Transverse colon (tissue), 4 donors: ENCODE measurements at regions of chr14 and their contacts with region 1.

Region 1: DNA sequence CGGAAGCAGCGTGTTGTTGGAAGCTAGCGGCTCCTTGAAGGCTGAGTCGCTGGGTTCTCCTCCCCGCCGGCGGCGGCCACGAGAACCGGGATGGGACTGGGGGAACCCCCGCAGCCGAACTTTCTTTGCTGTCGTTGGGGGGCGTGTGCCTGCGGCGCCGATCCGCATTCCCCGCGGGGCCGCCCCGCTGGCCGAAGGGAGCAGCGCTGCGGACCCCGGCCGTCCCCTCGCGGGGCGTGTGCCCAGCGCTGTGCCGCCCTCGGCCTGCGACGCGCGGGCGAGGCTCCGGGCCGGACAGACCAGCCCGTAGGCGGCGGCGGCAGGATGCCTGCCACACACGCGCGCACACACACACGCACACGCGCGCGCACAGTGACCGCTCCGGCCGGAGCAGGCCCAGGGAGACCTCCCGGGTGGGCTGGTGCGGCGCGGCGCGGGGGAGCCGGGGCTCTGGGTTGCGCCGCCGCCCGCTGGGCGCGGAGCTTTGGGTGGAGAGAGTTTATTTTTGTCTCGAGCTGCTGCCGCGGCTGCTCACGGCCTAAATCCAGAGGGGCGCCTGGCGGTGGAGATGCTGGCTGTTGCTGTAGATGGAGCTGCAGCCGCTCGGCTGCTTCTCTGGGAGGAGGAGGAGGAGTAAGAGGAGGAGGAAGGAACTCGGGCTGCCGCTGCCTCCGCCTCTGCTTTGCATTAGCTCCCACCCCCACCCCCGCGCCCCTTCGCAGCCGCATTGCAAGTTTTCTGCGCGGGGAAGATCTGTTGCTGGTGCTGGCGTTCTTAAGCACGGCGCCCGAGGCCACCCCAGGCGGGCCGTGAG is at the start of gene SAMD4A:
- DNase-seq: peak; percentile 75
- H3K4me3 ChIP-seq: peak within 1 kb of the TSS; percentile 51 to 77 (median 70)
- H3K27ac ChIP-seq: peak within 1 kb of the TSS; percentile 97 to 99 (median 98)
- H3K4me1 ChIP-seq: peaks cover 0 to 35% (median 28%) of the 10 kb centered on the region in 4 donors
- H3K27me3 ChIP-seq: no peaks in the 10 kb centered on the region
- CTCF ChIP-seq: peak in 2 of 5 experiments; percentile 18 to 32
- EP300 ChIP-seq: no peak
- POLR2A ChIP-seq: peak; percentile 48
- total RNA-seq, gene SAMD4A: 15.3 to 40.2 (median 22.3) TPM

Region 2: GRCh38 chr14:53875324-53875897 is 691.2 kb before region 1 on chr14:
- in situ Hi-C with region 1: no loop called
- intact Hi-C with region 1: no loop called
- DNase-seq: no peak
- H3K4me3 ChIP-seq: no peak overlapping the region
- H3K27ac ChIP-seq: no peak overlapping the region
- H3K4me1 ChIP-seq: no peaks in the 10 kb centered on the region
- H3K27me3 ChIP-seq: no peaks in the 10 kb centered on the region
- CTCF ChIP-seq: no peak
- EP300 ChIP-seq: no peak
- POLR2A ChIP-seq: no peak

Region 3: GRCh38 chr14:54291491-54292191 is 275.0 kb before region 1 on chr14:
- in situ Hi-C with region 1: no loop called
- intact Hi-C with region 1: no loop called
- DNase-seq: no peak
- H3K4me3 ChIP-seq: no peak overlapping the region
- H3K27ac ChIP-seq: no peak overlapping the region
- H3K4me1 ChIP-seq: no peaks in the 10 kb centered on the region
- H3K27me3 ChIP-seq: no peaks in the 10 kb centered on the region
- CTCF ChIP-seq: no peak
- EP300 ChIP-seq: no peak
- POLR2A ChIP-seq: no peak

Region 4: GRCh38 chr14:54411371-54411770 is 155.2 kb before region 1 on chr14:
- in situ Hi-C with region 1: no loop called
- intact Hi-C with region 1: no loop called
- DNase-seq: no peak
- H3K4me3 ChIP-seq: no peak overlapping the region
- H3K27ac ChIP-seq: no peak overlapping the region
- H3K4me1 ChIP-seq: no peaks in the 10 kb centered on the region
- H3K27me3 ChIP-seq: no peaks in the 10 kb centered on the region
- CTCF ChIP-seq: no peak
- EP300 ChIP-seq: no peak
- POLR2A ChIP-seq: no peak

Region 5: GRCh38 chr14:54440873-54441868 is 125.4 kb before region 1 on chr14 and contains the start of gene CNIH1:
- in situ Hi-C with region 1: no loop called
- intact Hi-C with region 1: no loop called
- DNase-seq: peak; percentile 94
- H3K4me3 ChIP-seq: peak within 1 kb of the TSS; percentile 49 to 86 (median 72)
- H3K27ac ChIP-seq: peak within 1 kb of the TSS; percentile 94 to 97 (median 96)
- H3K4me1 ChIP-seq: peaks cover 10 to 37% (median 25%) of the 10 kb centered on the region in 4 donors
- H3K27me3 ChIP-seq: no peaks in the 10 kb centered on the region
- CTCF ChIP-seq: peak; percentile 89 to 97 (median 94)
- EP300 ChIP-seq: no peak
- POLR2A ChIP-seq: peak; percentile 62
- total RNA-seq, gene CNIH1: 40.8 to 184 (median 152) TPM

Region 6: DNA sequence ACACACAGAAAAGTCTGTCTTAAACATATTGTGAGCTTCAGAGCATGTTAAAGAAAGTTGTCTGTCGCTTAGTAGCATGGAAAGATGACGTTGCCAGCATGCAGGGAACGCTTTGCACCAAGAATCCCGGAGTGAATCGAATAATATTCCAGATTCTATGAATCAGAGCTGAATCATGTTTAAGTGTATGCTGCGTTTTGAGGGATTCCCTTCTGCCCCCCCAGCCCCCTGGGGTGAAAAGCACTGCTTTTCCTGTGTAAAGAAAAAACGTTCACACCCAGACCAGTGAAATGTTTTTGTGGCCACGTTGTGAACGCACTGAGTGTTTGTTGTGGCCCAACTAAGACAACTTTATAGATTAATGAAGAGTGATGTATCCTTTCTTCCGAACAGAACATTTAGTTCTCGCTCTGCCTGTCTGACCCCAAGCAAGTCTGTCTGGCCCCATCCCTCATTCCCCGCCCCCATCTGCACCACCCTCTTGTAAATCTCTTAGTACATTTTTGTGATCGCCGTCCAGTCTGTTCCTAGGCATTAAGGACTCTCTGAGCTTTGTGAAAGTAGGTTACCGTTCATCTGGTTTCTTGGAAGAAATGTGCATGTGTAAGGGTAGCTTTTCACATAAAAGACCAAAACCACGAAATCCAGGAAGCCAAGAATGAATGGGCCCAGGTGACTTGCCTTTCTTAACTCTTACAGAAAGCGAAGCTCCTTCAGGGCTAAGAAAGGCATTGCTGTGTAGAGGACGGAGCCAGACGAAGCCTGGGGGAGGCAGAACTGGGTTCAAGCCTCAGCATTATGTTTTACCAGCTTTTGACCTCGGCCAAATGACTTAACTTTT is 103.3 kb after region 1 on chr14:
- in situ Hi-C with region 1: no loop called
- intact Hi-C with region 1: loop called (anchors 5 kb)
- DNase-seq: peak; percentile 52
- H3K4me3 ChIP-seq: no peak overlapping the region
- H3K27ac ChIP-seq: peak overlapping the region; percentile 52 to 90 (median 84)
- H3K4me1 ChIP-seq: peaks cover 9 to 29% (median 22%) of the 10 kb centered on the region in 4 donors
- H3K27me3 ChIP-seq: no peaks in the 10 kb centered on the region
- CTCF ChIP-seq: no peak
- EP300 ChIP-seq: peak; percentile 82
- POLR2A ChIP-seq: no peak

Region 7: GRCh38 chr14:54691525-54692283 is 125.1 kb after region 1 on chr14:
- in situ Hi-C with region 1: loop called in 1 of 4 experiments (anchors 10 kb)
- intact Hi-C with region 1: loop called (anchors 5 kb)
- DNase-seq: peak; percentile 80
- H3K4me3 ChIP-seq: no peak overlapping the region
- H3K27ac ChIP-seq: peak overlapping the region in 3 of 4 donors; percentile 31 to 36 (median 36)
- H3K4me1 ChIP-seq: peaks cover 0 to 28% (median 2%) of the 10 kb centered on the region in 4 donors
- H3K27me3 ChIP-seq: no peaks in the 10 kb centered on the region
- CTCF ChIP-seq: peak; percentile 76 to 82 (median 80)
- EP300 ChIP-seq: no peak
- POLR2A ChIP-seq: no peak